OCI-LY7 (cell line): ENCODE measurements at regions of chr2 and their contacts with region 1.

Region 1: DNA sequence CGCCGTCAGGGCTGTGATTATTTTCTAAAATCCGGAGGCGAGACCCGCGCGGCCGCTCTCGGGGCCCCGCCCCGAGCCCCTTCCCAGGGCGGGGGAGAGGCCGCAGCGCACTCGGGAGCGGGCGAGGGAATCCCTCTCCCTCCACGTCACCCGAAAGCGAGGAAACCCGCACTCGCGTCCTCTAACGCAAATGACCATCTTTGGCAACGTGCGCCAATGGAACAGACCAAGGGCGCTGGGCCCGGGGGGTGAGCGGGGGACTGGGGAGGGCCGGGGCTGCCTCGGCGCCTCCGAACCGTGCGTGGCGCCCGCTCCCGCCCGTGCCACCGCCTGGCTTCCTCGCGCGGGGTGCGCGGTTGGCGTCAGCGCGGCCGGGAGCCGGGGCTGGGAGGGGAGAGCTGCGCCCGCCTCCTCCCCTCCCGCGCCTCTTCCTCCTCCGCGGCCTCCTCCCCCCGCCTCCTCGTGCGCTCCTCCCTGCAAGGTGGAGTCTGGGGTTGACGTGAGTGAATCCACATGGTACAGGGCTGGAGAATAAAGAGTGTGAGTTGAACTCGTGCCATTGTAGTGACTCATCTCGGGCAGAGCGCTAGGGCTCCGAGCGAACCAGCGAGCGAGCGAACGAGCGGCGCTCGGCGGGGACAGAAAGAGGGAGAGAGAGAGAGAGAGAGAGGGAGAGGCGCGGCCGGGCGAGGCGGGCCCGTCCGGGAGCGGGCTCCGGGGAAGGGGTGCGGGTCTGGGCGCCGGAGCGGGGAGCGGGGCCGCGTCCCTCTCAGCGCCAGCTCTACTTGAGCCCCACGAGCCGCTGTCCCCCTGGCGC is at the start of gene FOSL2:
- DNase-seq: peak; percentile 84
- H3K4me3 ChIP-seq: peak within 1 kb of the TSS; percentile 74
- H3K27ac ChIP-seq: peak within 1 kb of the TSS; percentile 3
- H3K4me1 ChIP-seq: peaks cover 21% of the 10 kb centered on the region
- CTCF ChIP-seq: no peak
- total RNA-seq, gene FOSL2: 0.03 and 0.35 TPM in 2 replicates

Region 2: DNA sequence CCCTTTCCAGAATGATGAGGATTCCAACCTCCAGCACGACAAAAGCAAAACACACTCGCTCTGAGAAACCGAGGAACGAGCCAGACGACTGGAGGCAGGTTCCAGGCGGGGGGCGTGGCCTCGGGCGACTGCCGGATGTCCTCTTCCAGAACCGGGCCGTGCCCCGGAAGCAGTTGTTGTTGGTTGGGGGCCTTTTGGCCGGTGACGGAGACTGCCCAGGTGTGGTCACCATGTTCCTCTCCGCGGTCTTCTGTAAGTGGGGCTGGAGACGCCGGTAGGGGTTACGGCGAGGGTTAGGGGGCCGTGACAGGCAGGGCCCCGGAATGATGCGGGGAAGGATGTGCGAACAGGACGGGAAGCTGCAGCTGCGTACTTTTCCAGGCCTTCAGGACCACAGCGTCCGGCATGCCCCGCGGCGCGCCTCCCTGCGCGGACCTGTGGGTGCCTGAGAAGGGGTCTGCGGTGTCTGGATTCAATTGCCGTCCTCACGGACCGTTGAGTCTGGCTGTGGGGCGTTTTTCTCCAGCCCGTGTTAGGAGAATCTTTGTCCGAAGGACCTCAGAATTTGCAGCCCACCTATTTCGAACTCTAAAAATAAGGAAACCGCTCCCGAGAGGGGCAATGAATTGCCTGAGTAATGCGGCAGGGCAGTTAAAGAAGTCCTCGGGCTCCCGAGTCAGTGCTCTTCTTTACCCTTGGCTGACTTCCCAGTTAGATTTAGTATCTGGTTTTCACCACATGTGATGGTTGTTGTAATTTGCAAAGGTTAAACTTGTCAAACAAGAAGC is 620.8 kb before region 1 on chr2 and contains the start of gene MRPL33:
- CTCF ChIA-PET with region 1: no interaction called
- POLR2A ChIA-PET with region 1: no interaction called
- intact Hi-C with region 1: loop called (anchors 5 kb)
- DNase-seq: peak; percentile 87
- H3K4me3 ChIP-seq: peak within 1 kb of the TSS; percentile 82
- H3K27ac ChIP-seq: peak within 1 kb of the TSS; percentile 7
- H3K4me1 ChIP-seq: peaks cover 12% of the 10 kb centered on the region
- CTCF ChIP-seq: no peak
- total RNA-seq, gene MRPL33: 51.2 and 51.5 TPM in 2 replicates